Left cardiac atrium (tissue), 4 donors: ENCODE measurements at regions of chr6 and their contacts with region 1.

Region 1: DNA sequence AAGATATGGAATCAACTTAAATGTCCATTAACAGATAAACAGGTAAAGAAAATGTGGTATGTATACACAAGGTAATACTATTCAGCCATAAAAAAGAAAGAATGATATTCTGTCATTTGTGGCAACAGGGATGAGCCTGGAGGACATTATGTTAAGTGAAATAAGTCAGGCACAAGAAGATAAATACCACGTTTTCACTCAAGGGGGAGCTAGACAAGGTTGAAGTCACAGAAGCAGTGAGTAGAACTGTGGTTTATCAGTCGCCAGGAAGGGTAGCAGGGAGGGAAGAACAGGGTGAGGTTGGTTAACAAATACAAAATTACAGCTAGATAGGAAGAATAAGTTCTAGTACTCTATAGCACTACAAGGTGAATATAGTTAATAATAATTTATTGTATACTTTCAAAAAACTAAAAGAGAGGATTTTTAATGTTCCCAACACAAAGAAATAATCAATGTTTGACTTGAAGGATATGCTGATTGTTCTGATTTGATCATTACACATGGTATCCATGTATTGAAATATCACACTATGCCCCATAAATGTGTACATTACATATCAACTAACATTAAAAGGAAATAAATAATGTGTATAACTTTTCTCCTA is 21.1 kb downstream of the RTN4IP1 start:
- DNase-seq: no peak
- ATAC-seq: peak; percentile 36 to 57

Region 2: GRCh38 chr6:106979427-106979884 is 371.3 kb after region 1 on chr6:
- intact Hi-C with region 1: loop called in 1 of 2 experiments (anchors 5 kb)
- DNase-seq: peak; percentile 87
- ATAC-seq: peak; percentile 58 to 87

Region 3: DNA sequence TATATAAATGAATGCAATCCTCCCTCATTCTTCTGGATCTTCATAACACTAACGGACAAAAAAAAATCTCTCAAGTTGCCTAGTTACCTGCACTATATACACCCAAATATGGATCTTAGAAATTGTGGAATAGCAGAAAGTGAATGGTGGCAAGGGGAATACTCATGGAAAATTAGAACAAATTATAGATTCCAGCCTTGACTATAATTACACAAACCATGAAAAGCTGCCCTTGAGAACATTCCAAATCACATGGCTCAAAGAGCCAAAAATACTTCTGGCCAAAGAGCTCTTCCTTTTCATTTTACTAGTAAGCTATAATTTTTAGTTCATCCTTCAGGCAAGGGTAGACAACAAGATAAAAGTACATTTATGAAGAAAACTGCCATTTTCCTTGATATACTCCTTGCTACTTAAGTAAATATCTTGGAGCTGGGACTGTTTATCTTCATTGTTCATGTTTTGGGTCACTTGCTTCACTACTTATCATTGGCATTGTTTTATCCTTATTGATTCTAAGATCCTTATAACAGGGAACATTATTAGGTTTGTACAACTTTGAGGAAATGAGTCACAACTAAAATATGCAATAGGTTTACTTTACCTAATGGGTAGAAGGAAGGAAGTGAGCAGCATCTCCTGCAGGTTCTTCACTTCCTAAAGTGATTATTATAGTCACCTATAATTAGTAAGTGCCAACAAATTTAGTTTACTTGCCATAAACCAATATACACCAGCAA is 413.5 kb after region 1 on chr6:
- intact Hi-C with region 1: no loop called
- DNase-seq: no peak
- ATAC-seq: no peak